ENCODE measurements at regions of chr2 and their contacts with region 1.

Region 1: GRCh38 chr2:69381337-69381737 is 5.7 kb downstream of the GFPT1 start:
- DNase-seq: peak; percentile 60
- ATAC-seq: peak; percentile 51
- H3K4me3 ChIP-seq: no peak overlapping the region
- H3K27ac ChIP-seq: no peak overlapping the region
- H3K4me1 ChIP-seq: peaks cover 4% of the 10 kb centered on the region
- H3K27me3 ChIP-seq: no peaks in the 10 kb centered on the region
- CTCF ChIP-seq: no peak
- POLR2A ChIP-seq: no peak
- RAD21 ChIP-seq: no peak

Region 2: DNA sequence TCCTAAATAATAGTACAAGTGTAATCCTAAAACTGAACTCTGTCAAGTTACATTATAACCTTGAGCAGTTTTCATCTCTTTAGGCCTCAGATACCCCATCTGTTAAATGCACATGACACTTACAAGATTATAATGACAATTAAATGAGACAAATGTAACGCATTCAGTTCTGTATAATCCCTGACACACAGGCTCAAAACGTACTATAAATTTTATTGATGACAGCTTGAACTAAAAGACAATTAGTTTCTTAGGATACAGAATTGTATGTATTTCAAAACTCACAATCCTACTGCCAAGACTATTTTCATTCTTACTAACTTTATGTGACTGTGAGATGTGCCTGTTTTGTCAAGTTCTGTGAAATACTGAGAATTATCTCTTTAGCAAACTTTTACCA is 50.6 kb before region 1 on chr2:
- CTCF ChIA-PET with region 1: no interaction called
- POLR2A ChIA-PET with region 1: interaction called, 14 read pairs
- dilution Hi-C with region 1: no loop called
- in situ Hi-C with region 1: no loop called
- intact Hi-C with region 1: no loop called
- DNase-seq: no peak
- ATAC-seq: no peak
- H3K4me3 ChIP-seq: no peak overlapping the region
- H3K27ac ChIP-seq: no peak overlapping the region
- H3K4me1 ChIP-seq: no peaks in the 10 kb centered on the region
- H3K27me3 ChIP-seq: no peaks in the 10 kb centered on the region
- CTCF ChIP-seq: no peak
- POLR2A ChIP-seq: no peak
- RAD21 ChIP-seq: no peak

Region 3: GRCh38 chr2:69770193-69771146 is 389.1 kb after region 1 on chr2:
- CTCF ChIA-PET with region 1: no interaction called
- POLR2A ChIA-PET with region 1: interaction called, 10 read pairs
- dilution Hi-C with region 1: no loop called
- in situ Hi-C with region 1: no loop called
- intact Hi-C with region 1: no loop called
- DNase-seq: peak; percentile 88
- ATAC-seq: peak; percentile 65
- H3K4me3 ChIP-seq: no peak overlapping the region
- H3K27ac ChIP-seq: no peak overlapping the region; the same call in 1 of the 2 replicates
- H3K4me1 ChIP-seq: peaks cover 20% of the 10 kb centered on the region
- H3K27me3 ChIP-seq: no peaks in the 10 kb centered on the region
- CTCF ChIP-seq: no peak
- POLR2A ChIP-seq: no peak
- RAD21 ChIP-seq: no peak

Measured in IMR-90 (cell line).